PC-3 (cell line): ENCODE measurements at regions of chr6 and their contacts with region 1.

Region 1: DNA sequence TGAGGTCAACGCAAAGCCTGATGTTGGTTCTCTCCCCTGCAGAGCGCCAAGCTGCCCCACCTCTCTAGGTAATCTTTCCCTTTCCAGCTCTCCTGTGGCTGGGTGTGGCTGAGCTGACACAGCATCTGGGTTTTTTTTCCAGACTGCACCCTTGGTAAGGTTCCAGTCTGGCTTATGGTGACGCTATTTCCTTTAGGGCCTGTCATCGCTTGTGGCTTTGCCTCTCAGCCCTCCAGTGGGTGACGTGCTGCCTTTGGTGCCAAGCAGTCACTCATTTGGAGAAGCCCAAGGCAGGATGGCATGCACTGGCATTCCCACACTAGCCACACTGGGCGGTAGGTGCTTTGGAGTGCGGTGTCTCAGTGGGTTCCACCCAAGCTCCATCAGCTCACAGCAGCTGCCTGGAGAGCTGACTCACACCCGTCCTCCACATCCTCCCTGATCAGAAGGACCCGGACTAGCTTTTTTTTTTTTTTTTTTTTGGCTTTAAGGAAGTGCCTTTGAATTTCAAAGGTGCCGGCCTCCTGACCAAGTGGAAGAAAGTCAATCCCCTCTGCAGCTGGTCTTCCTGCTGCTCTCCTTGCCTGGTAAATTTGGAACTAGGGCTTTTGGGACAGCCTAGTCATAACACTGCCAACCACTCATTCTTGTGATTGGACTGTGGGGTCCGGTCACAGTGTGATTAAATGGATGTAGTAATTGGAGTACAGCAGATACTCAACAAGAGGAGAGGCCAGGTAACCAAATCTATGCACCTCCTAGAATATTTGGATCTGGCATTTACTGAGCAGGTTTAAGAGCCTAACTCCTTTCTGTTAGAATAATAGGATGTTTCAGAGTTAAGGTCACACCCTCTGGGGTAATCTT is 153.6 kb downstream of the CD83 start:
- DNase-seq: peak; percentile 99
- ATAC-seq: peak; percentile 96
- H3K4me3 ChIP-seq: peak overlapping the region; percentile 44
- H3K27ac ChIP-seq: peak overlapping the region; percentile 100
- H3K4me1 ChIP-seq: peaks cover 38% of the 10 kb centered on the region
- H3K27me3 ChIP-seq: no peaks in the 10 kb centered on the region
- CTCF ChIP-seq: no peak

Region 2: DNA sequence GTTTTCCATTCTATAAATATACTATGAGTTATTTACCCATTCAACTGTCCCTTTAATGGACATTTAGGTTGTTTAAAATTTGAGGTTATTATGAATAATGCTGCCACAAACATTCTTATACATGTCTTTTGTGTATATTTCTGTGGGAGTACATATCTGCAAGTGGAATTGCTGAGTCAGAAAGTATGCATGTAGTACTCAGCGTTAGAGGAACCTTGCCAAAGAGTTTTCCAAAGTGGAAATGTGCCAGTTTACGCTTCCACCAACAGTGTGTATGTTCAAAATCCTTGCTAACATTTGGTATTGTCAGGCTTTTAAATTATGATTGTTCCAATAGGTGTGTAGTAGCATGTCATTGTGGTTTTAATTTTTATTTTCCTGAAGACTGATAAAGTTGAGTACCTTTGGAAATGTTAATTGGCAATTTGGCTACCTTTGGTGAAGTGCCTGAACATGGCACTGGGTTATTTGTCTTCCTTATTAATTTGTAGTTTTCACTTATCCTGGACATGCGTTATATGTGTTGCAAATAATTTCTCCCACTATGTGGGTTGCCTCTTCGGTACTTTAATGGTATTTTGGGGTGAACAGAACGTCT is 187.6 kb after region 1 on chr6:
- CTCF ChIA-PET with region 1: no interaction called
- POLR2A ChIA-PET with region 1: no interaction called
- intact Hi-C with region 1: loop called (anchors 1 kb)
- DNase-seq: peak; percentile 96
- ATAC-seq: peak; percentile 84
- H3K4me3 ChIP-seq: no peak overlapping the region; the same call in 1 of the 2 replicates
- H3K27ac ChIP-seq: peak overlapping the region; percentile 69
- H3K4me1 ChIP-seq: peaks cover 27% of the 10 kb centered on the region
- H3K27me3 ChIP-seq: no peaks in the 10 kb centered on the region
- CTCF ChIP-seq: no peak

Region 3: GRCh38 chr6:14706378-14706929 is 435.3 kb after region 1 on chr6:
- CTCF ChIA-PET with region 1: no interaction called
- POLR2A ChIA-PET with region 1: no interaction called
- intact Hi-C with region 1: loop called (anchors 1 kb)
- DNase-seq: peak; percentile 93
- ATAC-seq: peak; percentile 68
- H3K4me3 ChIP-seq: no peak overlapping the region
- H3K27ac ChIP-seq: peak overlapping the region; percentile 95
- H3K4me1 ChIP-seq: peaks cover 50% of the 10 kb centered on the region
- H3K27me3 ChIP-seq: no peaks in the 10 kb centered on the region
- CTCF ChIP-seq: no peak